ENCODE measurements at regions of chr3 and their contacts with region 1.

Region 1: DNA sequence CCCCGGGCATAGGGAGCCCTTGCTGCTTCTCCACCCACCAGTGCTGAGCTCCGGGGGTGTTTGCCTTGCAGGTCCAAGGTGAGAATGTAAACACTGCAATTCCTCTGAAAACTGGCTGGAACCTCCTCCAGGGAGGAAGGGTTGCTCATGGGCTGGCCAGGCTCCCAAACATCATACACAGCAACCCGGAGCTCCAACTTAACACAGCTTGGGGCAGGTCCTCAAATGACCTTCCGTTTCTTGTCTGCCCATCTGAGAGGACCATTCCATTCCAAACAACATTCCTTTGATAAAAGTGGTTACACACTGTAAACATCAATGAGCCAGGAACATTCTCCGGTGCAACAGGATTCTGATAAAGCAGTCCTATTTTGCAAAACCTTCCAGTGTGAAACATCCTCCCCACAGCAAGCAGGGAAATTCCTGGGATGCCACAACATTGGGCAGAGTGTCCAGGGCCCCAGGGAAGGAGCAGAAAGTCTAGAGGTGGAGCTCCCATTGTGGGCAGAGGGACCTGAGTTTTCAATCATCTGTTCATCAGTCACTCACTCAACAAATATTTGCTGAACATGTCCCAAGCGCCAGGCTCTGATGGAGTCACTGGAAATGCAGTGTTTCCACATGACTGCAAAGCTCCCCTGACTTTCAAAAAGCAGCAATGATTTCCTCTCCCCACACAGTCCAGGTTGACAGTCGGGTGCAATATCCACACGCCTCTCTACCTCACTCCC is 7.3 kb upstream of the HEG1 start:
- DNase-seq: no peak
- ATAC-seq: peak; percentile 69

Region 2: GRCh38 chr3:125119752-125120378 is 56.8 kb after region 1 on chr3:
- intact Hi-C with region 1: loop called (anchors 5 kb)
- DNase-seq: no peak
- ATAC-seq: no peak

Region 3: GRCh38 chr3:125141596-125142419 is 78.8 kb after region 1 on chr3:
- intact Hi-C with region 1: loop called (anchors 2 kb)
- DNase-seq: peak; percentile 88
- ATAC-seq: peak; percentile 74

Measured in Right ventricle myocardium inferior (tissue), 1 donor.